Esophagus muscularis mucosa (tissue), 4 donors: ENCODE measurements at regions of chr4 and their contacts with region 1.

Region 1: DNA sequence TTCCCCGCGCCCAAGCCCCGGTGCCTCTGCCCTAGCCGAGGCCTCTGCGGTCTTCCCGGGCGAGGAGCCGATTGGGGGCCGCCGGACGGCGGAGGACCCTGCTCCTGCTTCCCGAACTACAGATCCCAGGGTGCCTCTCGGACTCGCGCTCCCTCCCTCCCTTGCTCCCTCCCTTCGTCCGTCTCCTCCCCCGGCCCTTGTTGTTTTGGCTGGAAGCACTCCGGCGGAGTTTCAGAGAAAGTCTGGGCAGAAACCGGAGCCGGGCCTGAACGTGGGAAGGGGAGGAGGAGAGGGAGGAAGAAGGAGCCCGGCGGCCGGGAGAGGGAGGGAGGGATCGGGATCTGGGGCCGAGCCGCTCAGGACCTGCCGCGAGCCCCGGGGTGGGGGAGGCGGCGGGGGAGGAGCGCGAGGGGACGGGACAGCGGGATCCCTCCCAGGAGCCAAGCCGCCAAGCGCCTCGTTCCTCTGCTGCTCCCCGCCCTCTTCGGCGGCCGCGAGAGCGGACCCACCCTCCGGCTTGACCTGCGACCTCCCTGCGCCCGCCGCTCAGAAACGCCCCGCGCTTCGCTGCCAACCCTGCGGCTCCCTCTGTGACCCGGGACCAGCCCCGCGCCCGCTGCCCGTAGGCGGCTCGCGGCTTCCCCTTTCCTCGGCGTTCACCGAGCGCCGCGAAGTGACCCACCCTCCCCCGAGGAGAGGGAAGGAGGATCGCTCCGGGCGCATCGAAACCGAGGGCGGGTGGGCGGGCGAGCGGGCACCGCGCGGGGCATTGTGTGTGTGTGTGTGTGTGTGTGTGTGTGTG is 496 bp upstream of the GAB1 start:
- DNase-seq: peak; percentile 96
- H3K4me3 ChIP-seq: peak overlapping the region; percentile 90 to 97 (median 95)
- H3K27ac ChIP-seq: peak overlapping the region; percentile 92 to 97 (median 94)
- H3K4me1 ChIP-seq: peaks cover 22 to 43% (median 39%) of the 10 kb centered on the region in 4 donors
- H3K27me3 ChIP-seq: peaks cover 0 to 4% (median 0%) of the 10 kb centered on the region in 4 donors
- CTCF ChIP-seq: peak in 1 of 3 experiments; percentile 8
- EP300 ChIP-seq: no peak
- POLR2A ChIP-seq: peak; percentile 45

Region 2: DNA sequence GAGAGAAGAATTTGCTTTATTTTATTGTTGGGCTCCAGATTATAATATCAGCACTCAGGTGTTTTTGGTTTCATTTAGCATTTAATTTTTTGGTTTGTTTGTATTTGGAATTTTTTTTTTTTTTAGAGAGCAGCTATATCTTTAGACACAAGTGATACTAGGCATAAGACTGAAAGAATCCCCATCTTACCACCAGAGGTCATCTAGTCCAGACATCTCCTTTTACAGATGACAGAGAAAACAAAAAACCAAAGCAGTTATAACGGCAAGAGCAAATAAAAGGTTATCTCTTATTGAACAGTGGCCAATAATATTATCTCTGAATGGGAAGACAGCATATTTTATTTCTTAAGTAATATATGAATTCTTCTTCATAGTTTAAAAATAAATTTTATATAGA is 128.6 kb before region 1 on chr4:
- intact Hi-C with region 1: loop called (anchors 2 kb)
- DNase-seq: no peak
- H3K4me3 ChIP-seq: no peak overlapping the region
- H3K27ac ChIP-seq: peak overlapping the region in 1 of 4 donors; percentile 24
- H3K4me1 ChIP-seq: peaks cover 0 to 24% (median 11%) of the 10 kb centered on the region in 4 donors
- H3K27me3 ChIP-seq: no peaks in the 10 kb centered on the region
- CTCF ChIP-seq: peak; percentile 54 to 61 (median 58)
- EP300 ChIP-seq: no peak
- POLR2A ChIP-seq: no peak

Region 3: DNA sequence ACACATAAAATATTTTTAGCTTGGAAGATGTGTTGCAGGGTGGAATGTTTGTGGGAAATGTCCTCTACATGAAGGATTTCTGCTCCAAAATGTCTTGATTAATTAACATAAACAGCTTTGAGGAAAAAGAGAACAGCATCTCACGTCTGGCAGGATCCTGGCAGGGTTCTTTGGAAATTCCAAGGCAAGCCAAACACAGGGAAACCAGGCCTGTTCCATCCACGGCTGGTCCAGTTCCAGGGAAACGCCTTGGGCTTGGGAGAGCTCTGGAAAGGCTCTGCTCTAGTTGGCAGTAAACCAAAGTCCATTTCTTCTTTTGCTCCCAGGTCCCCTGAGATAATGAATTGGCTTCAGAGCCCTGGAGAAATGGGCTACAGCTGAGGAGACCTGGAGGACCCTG is 41.9 kb before region 1 on chr4:
- intact Hi-C with region 1: loop called (anchors 5 kb)
- DNase-seq: peak; percentile 95
- H3K4me3 ChIP-seq: no peak overlapping the region
- H3K27ac ChIP-seq: peak overlapping the region; percentile 53 to 79 (median 69)
- H3K4me1 ChIP-seq: peaks cover 22 to 75% (median 70%) of the 10 kb centered on the region in 4 donors
- H3K27me3 ChIP-seq: no peaks in the 10 kb centered on the region
- CTCF ChIP-seq: no peak
- EP300 ChIP-seq: no peak
- POLR2A ChIP-seq: no peak

Region 4: DNA sequence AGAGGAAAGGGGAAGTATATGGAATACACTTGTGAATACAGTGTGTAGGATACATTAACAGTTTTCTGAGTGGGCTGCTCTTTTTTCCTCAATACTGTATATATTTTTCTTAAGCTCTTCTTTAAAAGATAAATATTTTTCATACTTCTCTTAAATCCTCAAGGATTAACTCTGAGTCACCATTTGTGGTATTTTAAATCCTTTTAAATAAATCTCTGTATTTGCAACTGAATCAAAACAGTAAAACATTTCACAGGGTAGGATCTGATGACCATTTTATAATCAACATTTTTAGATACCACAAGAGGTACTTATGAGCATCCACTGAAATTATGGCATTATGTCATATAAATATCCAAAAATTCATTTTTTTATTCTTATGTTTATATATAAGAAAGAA is 88.1 kb after region 1 on chr4:
- intact Hi-C with region 1: no loop called
- DNase-seq: no peak
- H3K4me3 ChIP-seq: no peak overlapping the region
- H3K27ac ChIP-seq: no peak overlapping the region
- H3K4me1 ChIP-seq: peaks cover 25 to 78% (median 55%) of the 10 kb centered on the region in 4 donors
- H3K27me3 ChIP-seq: no peaks in the 10 kb centered on the region
- CTCF ChIP-seq: no peak
- EP300 ChIP-seq: no peak
- POLR2A ChIP-seq: no peak

Region 5: GRCh38 chr4:143482840-143483239 is 146.7 kb after region 1 on chr4:
- intact Hi-C with region 1: loop called (anchors 5 kb)
- DNase-seq: no peak
- H3K4me3 ChIP-seq: no peak overlapping the region
- H3K27ac ChIP-seq: no peak overlapping the region
- H3K4me1 ChIP-seq: peaks cover 0 to 14% (median 9%) of the 10 kb centered on the region in 4 donors
- H3K27me3 ChIP-seq: no peaks in the 10 kb centered on the region
- CTCF ChIP-seq: peak; percentile 61 to 67 (median 64)
- EP300 ChIP-seq: no peak
- POLR2A ChIP-seq: no peak

Region 6: GRCh38 chr4:145001635-145002034 is 1665.5 kb after region 1 on chr4:
- intact Hi-C with region 1: no loop called
- DNase-seq: no peak
- H3K4me3 ChIP-seq: no peak overlapping the region
- H3K27ac ChIP-seq: no peak overlapping the region
- H3K4me1 ChIP-seq: no peaks in the 10 kb centered on the region
- H3K27me3 ChIP-seq: no peaks in the 10 kb centered on the region
- CTCF ChIP-seq: no peak
- EP300 ChIP-seq: no peak
- POLR2A ChIP-seq: no peak